Activated B cell treated with CpG ODN at 0.5 μM for 24 hours (primary cell): ENCODE measurements at regions of chrX and their contacts with region 1.

Region 1: GRCh38 chrX:50697691-50698090 is 116.3 kb downstream of the SHROOM4 start:
- DNase-seq: no peak
- ATAC-seq: no peak
- H3K4me3 Mint-ChIP-seq: no peak overlapping the region
- H3K27ac Mint-ChIP-seq: no peak overlapping the region
- H3K4me1 Mint-ChIP-seq: no peaks in the 10 kb centered on the region
- H3K27me3 Mint-ChIP-seq: peaks cover 4% of the 10 kb centered on the region
- CTCF ChIP-seq: no peak

Region 2: GRCh38 chrX:50648151-50648550 is 49.5 kb before region 1 on chrX:
- CTCF ChIA-PET with region 1: no interaction called
- POLR2A ChIA-PET with region 1: no interaction called
- intact Hi-C with region 1: loop called (anchors 5 kb)
- DNase-seq: no peak
- ATAC-seq: no peak
- H3K4me3 Mint-ChIP-seq: no peak overlapping the region
- H3K27ac Mint-ChIP-seq: no peak overlapping the region
- H3K4me1 Mint-ChIP-seq: no peaks in the 10 kb centered on the region
- H3K27me3 Mint-ChIP-seq: no peaks in the 10 kb centered on the region
- CTCF ChIP-seq: no peak